ENCODE measurements at regions of chr4 and their contacts with region 1.

Region 1: GRCh38 chr4:73653695-73654106 is 33.5 kb upstream of the RASSF6 start:
- DNase-seq: peak; percentile 34
- CTCF ChIP-seq: no peak

Region 2: DNA sequence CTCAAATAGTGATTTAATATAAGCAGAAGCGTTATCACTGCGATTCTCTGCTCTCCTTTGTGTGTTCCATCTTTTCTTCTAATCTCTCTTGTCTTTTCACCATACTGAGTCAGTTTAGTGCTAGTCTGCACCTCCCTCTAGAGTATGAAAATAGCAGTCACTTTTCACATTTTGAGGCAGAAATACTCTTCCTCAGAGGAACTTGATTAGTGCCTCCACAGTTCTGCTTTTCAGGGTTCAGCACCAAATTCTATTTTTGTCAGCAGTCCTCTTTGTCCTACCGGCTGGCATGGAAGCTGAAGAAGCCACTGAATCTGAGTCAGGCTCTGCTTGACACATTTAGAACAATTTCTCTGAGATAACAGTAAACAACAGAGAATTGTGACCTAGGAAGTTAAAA is 345.4 kb before region 1 on chr4:
- in situ Hi-C with region 1: loop called (anchors 25 kb)
- DNase-seq: peak; percentile 26
- CTCF ChIP-seq: peak; percentile 46

Region 3: GRCh38 chr4:73573794-73574406 is 79.8 kb before region 1 on chr4:
- in situ Hi-C with region 1: loop called (anchors 10 kb)
- DNase-seq: peak; percentile 36
- CTCF ChIP-seq: peak; percentile 81

Region 4: GRCh38 chr4:73891739-73892405 is 238.2 kb after region 1 on chr4:
- in situ Hi-C with region 1: no loop called
- DNase-seq: no peak
- CTCF ChIP-seq: no peak

Region 5: DNA sequence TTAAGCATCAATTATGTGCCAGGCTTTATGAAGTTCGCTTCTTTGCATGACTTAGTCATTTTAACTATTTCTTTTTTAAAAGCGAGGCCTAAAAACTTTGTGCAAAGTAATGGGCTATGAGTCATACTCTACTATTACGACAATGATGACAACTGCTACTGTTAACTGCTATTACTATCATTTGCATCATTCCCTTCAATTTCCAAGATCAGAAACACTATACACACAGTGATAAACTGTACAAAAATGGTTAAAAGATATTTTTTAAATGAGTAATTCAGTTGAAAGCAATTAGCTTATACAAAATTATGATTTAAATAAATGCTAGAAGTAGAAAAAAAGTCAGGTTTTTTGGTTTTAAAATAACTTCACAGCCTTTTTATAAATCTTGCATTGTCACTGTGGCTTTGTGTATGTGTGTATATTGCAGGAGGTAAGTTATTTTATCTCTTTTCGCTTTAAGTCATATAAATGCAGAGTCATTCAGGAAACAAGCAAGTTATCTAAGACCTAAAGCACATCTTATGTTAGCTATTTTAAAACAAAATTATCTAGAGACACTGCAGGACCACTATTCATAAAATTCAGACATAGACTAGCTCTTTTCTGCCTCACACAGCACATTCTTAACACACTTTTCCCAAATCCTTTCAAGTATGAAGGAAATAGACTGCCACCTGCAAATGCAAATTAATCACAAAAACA is 403.3 kb after region 1 on chr4:
- in situ Hi-C with region 1: no loop called
- DNase-seq: no peak
- CTCF ChIP-seq: no peak

Measured in GM13976 (cell line).